ENCODE measurements at regions of chr1 and their contacts with region 1.

Region 1: GRCh38 chr1:48055876-48056764 is 58.9 kb upstream of the TRABD2B start:
- DNase-seq: no peak
- ATAC-seq: peak in 1 of 4 donors; percentile 25
- H3K4me3 ChIP-seq: no peak overlapping the region
- H3K27ac ChIP-seq: no peak overlapping the region
- H3K4me1 ChIP-seq: no peaks in the 10 kb centered on the region
- H3K27me3 ChIP-seq: no peaks in the 10 kb centered on the region
- CTCF ChIP-seq: no peak
- POLR2A ChIP-seq: no peak

Region 2: DNA sequence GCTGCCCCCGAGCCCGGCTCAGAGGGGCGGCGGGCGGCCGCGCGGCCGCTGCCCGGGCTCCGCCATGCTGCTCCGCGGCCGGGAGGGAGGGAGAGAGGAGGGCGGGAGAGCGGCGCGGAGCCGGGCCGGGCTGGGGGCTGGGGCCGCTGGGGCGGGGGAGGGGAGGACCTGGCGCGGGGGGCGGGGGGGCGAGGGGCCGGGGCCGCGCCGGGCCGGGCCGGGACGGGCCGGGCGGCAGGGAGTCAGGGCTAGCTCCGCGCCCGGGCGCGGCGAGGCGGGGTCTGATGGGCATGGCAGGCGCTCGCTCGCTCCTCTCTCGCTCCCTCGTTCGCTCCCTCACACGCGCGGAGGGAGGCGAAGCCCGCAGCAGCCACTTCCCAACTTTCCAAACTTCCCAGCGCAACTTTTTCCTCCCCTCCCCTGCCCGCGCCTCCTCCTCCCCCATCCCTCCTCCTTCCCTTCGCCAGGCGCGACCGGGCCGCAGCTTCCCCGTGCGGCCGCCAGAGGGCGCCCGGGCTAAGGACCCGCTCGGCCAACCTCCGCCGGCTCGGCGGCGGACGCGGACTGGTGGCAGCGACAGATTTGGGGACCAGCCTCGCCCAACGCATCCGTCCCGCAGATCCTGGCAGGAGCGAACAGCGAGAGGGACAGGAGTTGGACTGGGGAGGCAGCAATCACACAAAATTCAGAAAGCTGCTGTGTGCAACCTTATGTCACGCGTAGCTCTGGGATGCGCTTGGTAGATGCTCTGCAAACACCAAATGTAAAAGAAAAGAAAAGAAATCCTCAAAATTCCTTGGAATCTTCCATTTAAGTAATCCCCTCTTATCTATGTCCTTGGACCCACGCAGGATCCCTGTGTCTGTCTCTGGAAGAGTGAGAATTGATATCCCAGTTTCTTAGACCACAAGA is 58.6 kb before region 1 on chr1 and contains the start of gene TRABD2B:
- intact Hi-C with region 1: loop called in 1 of 2 experiments (anchors 10 kb)
- DNase-seq: peak; percentile 82 to 91 (median 88)
- ATAC-seq: peak; percentile 85 to 91 (median 86)
- H3K4me3 ChIP-seq: peak within 1 kb of the TSS; percentile 64 to 78 (median 70)
- H3K27ac ChIP-seq: peak within 1 kb of the TSS; percentile 33 to 82 (median 64)
- H3K4me1 ChIP-seq: peaks cover 0 to 30% (median 4%) of the 10 kb centered on the region in 4 donors
- H3K27me3 ChIP-seq: no peaks in the 10 kb centered on the region
- CTCF ChIP-seq: peak; percentile 92 to 94 (median 94)
- POLR2A ChIP-seq: no peak
- total RNA-seq, gene TRABD2B: 0.55 to 9.5 (median 1.8) TPM